ENCODE measurements at regions of chr18 and their contacts with region 1.

Region 1: GRCh38 chr18:58781627-58782194 is 83.0 kb upstream of the ZNF532 start:
- H3K4me3 Mint-ChIP-seq: no peak overlapping the region
- H3K27ac Mint-ChIP-seq: no peak overlapping the region
- H3K4me1 Mint-ChIP-seq: peaks cover 5% of the 10 kb centered on the region
- H3K27me3 Mint-ChIP-seq: peaks cover 8% of the 10 kb centered on the region

Region 2: DNA sequence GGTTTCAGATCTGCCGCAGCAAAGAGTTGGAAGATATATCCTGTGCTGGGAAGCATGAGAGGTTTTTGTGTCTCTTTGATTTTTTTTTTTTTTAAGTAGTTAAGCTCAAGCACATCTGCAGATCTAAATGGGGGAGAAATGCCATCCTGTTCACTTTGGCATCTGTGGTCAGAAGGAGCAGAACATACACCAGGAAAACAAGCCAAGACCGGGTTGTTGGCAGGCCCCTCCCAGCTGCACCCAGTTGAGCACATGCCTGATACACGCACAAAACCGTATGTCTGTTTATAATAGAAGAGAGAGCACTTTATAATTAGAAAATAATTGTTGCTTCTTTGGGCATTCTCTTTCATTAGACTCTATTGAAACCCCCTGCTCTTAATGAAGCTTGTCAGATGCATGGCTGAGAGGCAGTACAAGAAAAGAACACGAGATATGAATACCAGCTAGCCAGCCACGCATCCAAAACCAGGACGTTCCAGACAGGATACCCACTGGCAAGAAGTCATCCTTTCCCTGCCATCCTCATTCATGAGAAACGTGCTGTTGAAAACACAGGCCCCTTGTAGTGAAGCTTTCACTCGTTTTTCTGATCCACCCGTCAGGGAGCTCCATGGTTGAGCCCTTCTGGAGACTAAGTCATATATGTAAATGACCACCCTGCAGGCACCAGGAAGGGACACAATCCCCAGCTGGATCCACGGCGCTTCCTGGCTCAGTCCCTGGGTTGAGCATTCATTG is 305.0 kb before region 1 on chr18:
- intact Hi-C with region 1: no loop called
- H3K4me3 Mint-ChIP-seq: no peak overlapping the region
- H3K27ac Mint-ChIP-seq: no peak overlapping the region
- H3K4me1 Mint-ChIP-seq: no peaks in the 10 kb centered on the region
- H3K27me3 Mint-ChIP-seq: peaks cover 5% of the 10 kb centered on the region

Region 3: GRCh38 chr18:58727776-58728500 is 53.8 kb before region 1 on chr18:
- intact Hi-C with region 1: no loop called
- H3K4me3 Mint-ChIP-seq: no peak overlapping the region
- H3K27ac Mint-ChIP-seq: no peak overlapping the region
- H3K4me1 Mint-ChIP-seq: peaks cover 13% of the 10 kb centered on the region
- H3K27me3 Mint-ChIP-seq: no peaks in the 10 kb centered on the region

Region 4: DNA sequence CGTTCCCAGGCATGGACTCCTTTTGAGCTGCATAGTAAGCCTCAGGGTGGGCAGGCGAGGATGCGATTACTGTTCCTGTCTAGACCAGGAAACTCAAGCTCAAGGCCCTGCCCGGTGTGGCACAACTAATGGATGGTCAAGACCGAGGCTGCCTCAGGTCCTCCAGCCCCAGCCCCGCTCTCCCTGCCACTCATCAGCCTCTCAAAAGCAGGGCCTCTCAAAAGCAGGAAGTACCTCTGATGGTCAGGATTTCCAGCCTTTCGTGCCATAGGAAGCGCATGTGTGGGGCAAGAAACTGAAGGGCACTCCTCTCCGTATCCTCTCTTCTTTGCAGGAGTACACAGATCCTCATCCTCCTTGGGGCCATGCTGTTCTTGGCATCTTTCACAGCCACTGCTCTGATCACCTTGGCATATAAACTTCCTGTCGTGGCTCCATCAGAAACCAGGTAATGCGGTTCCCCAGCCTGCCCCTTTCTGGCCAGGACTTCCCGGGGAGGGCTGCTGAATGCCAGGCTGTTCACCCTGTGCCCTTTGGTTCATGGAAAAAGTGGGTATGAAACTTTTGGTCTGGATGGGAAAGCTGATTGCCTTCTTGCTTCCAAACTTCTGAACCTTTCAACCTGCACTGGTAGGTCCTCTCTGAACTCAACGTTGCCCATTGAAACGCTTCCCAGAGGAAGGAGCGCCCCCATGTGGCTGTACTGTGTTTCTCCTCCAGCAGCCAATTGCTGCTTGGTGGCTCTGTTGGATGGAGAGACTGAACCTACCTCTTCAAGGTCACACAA is 275.2 kb after region 1 on chr18:
- intact Hi-C with region 1: loop called (anchors 1 kb)
- H3K4me3 Mint-ChIP-seq: no peak overlapping the region
- H3K27ac Mint-ChIP-seq: no peak overlapping the region
- H3K4me1 Mint-ChIP-seq: peaks cover 3% of the 10 kb centered on the region
- H3K27me3 Mint-ChIP-seq: peaks cover 3% of the 10 kb centered on the region

Region 5: DNA sequence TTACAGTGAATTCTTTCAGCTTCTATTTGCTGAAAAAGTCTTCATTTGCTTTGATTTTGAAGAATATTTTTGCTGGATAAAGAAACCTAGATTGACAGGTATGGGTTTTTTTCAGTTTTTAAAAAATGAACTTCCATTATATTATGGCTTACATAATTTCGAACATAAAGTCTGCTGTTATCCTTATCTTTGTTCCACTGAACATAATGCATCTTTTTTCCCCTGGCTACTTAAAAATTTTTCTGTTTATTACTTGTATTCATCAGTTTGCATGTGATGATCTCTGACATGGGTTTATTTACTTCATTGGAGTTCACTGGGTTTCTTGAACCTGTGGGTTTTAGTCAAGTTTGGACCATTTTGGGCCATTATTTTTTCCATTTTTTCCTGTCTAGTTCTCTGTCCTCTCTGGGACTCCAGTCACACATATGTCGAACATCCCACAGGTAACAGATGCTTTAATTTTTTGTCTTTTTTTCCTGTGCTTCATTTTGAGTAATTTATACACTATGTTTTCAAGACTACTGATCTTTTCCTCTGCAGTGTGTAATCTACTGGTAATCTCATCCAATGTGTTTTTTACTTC is 391.0 kb after region 1 on chr18:
- intact Hi-C with region 1: no loop called
- H3K4me3 Mint-ChIP-seq: no peak overlapping the region
- H3K27ac Mint-ChIP-seq: no peak overlapping the region
- H3K4me1 Mint-ChIP-seq: no peaks in the 10 kb centered on the region
- H3K27me3 Mint-ChIP-seq: no peaks in the 10 kb centered on the region

Measured in dendritic cell treated with granulocyte-macrophage colony-stimulating factor and Interleukin-4, amounts not matched to agents 40 ng/mL and 50 ng/mL, for 4 days (primary cell).